Mammary epithelial cell (primary cell): ENCODE measurements at regions of chrX and their contacts with region 1.

Region 1: GRCh38 chrX:130165703-130166502 is at the start of gene AIFM1:
- DNase-seq: peak; percentile 94
- H3K4me3 ChIP-seq: peak within 1 kb of the TSS; percentile 71 to 74 (median 73)
- H3K27ac ChIP-seq: peak within 1 kb of the TSS; percentile 66
- H3K4me1 ChIP-seq: peaks cover under 1% of the 10 kb centered on the region
- H3K27me3 ChIP-seq: no peaks in the 10 kb centered on the region
- CTCF ChIP-seq: no peak
- total RNA-seq, gene AIFM1: 10.2 to 35.7 TPM

Region 2: GRCh38 chrX:130110379-130111219 is 55.3 kb before region 1 on chrX and contains the start of gene ELF4:
- CTCF ChIA-PET with region 1: no interaction called
- dilution Hi-C with region 1: no loop called
- in situ Hi-C with region 1: no loop called
- intact Hi-C with region 1: loop called (anchors 2 kb)
- DNase-seq: peak; percentile 78
- H3K4me3 ChIP-seq: peak within 1 kb of the TSS; percentile 59 to 76 (median 62)
- H3K27ac ChIP-seq: peak within 1 kb of the TSS; percentile 65
- H3K4me1 ChIP-seq: peaks cover 13% of the 10 kb centered on the region
- H3K27me3 ChIP-seq: no peaks in the 10 kb centered on the region
- CTCF ChIP-seq: no peak
- total RNA-seq, gene ELF4: 12.3 to 26.3 TPM

Region 3: DNA sequence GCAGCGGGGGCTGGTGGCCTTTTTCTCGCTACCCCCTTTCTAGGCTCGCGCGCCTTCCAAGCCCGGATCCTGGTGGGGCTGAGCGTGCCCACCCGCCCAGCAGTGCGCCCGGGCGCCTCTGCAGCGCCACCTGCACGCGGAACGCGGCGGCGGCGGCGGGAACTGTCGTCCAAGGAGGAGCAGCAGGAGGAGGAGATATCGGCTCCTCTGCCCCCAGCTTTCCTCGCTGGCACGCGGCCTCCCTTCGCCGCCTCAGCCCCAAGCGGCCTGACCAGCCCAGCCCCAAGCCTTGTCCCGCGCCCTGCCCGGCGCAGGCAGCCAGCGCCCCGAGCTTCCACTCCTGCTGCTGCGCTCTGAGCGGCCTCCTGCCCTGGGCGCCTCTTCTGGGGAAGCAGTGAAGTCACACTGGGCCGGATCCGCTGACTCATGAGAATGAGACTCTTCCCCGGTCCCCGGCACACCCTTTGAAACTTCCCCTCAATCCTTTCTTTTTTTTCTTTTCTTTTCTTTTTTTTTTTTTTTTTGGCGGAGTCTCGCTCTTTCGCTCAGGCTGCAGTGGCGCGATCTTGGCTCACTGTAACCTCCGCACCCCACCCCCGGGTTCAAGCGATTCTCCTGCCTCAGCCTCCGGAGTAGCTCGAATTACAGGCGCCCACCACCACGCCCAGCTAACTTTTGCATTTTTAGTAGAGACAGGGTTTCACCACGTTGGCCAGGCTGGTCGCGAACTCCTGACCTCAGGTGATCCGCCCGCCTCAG is 45.0 kb before region 1 on chrX:
- CTCF ChIA-PET with region 1: no interaction called
- dilution Hi-C with region 1: no loop called
- in situ Hi-C with region 1: no loop called
- intact Hi-C with region 1: loop called (anchors 1 kb)
- DNase-seq: peak; percentile 82
- H3K4me3 ChIP-seq: peak overlapping the region in 2 of 3 experiments; percentile 35 to 44
- H3K27ac ChIP-seq: peak overlapping the region; percentile 46
- H3K4me1 ChIP-seq: peaks cover 26% of the 10 kb centered on the region
- H3K27me3 ChIP-seq: no peaks in the 10 kb centered on the region
- CTCF ChIP-seq: peak; percentile 33 to 67